Dorsolateral prefrontal cortex (tissue), 120 donors: ENCODE measurements at regions of chr21 and their contacts with region 1.

Region 1: DNA sequence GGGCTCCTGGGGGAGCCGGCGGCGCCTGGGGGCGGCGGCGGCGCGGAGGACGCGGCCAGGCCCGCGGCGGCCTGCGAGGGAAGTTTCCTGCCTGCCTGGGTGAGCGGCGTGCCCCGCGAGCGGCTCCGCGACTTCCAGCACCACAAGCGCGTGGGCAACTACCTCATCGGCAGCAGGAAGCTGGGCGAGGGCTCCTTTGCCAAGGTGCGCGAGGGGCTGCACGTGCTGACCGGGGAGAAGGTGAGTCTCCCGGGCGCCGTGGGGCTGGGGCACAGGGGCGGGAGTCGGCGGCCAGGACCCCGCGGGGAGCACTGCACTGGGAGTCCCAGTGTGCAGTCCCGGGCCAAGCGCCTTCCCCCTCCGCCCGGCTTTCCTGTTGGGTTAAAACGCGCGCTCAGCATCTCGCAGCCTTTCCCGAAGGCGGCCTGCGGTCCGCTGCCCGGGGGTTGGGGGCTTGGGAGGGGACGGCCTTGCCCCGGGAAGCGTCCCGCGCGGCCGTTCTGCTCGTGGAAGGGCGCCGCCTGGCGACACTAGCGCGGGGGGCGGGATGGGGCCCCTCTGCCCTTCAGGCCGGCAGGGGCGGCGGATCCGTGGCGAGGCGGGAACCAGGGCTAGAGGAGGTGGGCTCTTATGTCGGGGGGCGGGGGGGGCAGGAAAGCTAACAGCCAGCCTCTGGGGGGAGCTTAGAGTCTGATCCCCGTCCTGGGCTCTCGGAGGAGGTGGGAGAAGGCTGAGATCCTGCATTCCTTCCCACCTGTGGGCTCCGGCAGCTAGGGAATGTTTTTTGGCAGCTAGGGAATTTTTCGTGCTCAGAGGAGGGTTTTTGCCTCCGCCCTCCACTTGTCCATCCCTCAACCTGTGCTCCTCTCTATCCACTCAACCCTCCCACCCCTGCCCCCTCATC is 1.1 kb downstream of the HUNK start:
- DNase-seq: peak in 4 of 10 donors; percentile 28 to 56 (median 40)
- H3K4me3 ChIP-seq: peak overlapping the region; percentile 41 to 81 (median 67)
- H3K27ac ChIP-seq: peak overlapping the region in 43 of 59 donors; percentile 9 to 88 (median 65)
- H3K27me3 ChIP-seq: peaks cover 0 to 8% (median 0%) of the 10 kb centered on the region in 45 donors
- CTCF ChIP-seq: peak in 54 of 56 donors; percentile 18 to 75 (median 54)

Region 2: DNA sequence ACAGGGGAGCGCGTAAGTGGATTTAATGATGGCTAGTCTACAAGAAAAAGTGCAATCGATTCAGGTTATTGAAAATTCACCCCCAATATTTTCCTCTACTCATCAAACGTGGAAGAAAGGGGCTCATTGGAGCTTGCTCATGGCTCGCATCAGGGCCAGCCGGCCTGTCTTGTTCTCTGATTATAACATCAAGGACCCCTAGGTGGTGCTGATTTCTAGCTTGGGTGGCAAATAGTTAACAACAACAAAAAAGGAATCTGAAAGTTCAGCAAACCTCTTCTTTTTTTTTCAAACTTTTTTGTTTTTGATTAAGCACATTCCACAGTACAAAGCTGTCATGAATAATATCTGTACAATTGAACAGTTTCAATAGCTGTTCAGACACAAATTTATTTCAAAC is 250.3 kb before region 1 on chr21:
- intact Hi-C with region 1: no loop called
- DNase-seq: no peak
- H3K4me3 ChIP-seq: no peak overlapping the region
- H3K27ac ChIP-seq: no peak overlapping the region
- H3K27me3 ChIP-seq: no peaks in the 10 kb centered on the region
- CTCF ChIP-seq: peak in 1 of 56 donors; percentile 9

Region 3: DNA sequence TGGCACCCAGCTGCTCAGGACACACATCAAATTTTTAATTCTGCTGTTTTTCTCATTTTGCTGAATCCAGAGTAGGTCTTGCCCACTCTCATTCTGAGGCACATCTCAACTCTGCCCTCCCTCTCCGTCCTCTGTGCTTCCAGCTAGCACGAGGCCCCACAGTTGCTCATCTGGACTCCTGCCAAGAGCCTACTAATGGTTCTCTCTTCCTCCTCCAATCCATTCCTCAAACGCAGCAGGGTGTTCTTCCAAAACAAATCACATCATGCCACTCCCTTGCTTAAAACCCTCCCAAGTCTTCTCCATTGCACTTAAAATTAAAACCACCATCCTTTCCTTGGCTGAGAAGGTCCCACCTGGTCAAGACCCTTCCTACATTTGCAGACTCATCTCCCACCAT is 92.2 kb before region 1 on chr21:
- intact Hi-C with region 1: loop called in 1 of 2 experiments (anchors 5 kb)
- DNase-seq: peak in 2 of 10 donors; percentile 21 to 49
- H3K4me3 ChIP-seq: no peak overlapping the region
- H3K27ac ChIP-seq: no peak overlapping the region
- H3K27me3 ChIP-seq: no peaks in the 10 kb centered on the region
- CTCF ChIP-seq: no peak

Region 4: DNA sequence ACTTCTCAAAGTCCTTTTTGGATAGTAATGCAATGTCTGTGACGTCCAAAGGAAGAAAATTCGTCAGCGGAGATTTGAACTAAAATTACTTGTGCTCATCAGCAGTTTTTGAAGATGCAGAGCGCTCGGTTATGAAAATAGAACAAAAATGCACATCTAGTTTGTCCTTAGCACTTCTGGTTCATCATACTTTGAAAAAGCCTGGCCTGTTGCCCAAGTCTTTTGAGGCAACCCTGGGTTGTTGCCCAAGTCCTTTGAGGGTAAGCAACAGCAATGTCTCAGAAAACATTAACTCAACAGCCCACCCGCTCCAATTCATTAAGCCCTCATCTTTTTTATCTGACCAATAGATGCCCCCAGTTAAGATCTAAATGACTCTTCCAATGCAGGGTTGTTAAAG is 90.7 kb after region 1 on chr21:
- intact Hi-C with region 1: no loop called
- DNase-seq: no peak
- H3K4me3 ChIP-seq: no peak overlapping the region
- H3K27ac ChIP-seq: no peak overlapping the region
- H3K27me3 ChIP-seq: no peaks in the 10 kb centered on the region
- CTCF ChIP-seq: no peak